ENCODE measurements at regions of chr17 and their contacts with region 1.

Region 1: DNA sequence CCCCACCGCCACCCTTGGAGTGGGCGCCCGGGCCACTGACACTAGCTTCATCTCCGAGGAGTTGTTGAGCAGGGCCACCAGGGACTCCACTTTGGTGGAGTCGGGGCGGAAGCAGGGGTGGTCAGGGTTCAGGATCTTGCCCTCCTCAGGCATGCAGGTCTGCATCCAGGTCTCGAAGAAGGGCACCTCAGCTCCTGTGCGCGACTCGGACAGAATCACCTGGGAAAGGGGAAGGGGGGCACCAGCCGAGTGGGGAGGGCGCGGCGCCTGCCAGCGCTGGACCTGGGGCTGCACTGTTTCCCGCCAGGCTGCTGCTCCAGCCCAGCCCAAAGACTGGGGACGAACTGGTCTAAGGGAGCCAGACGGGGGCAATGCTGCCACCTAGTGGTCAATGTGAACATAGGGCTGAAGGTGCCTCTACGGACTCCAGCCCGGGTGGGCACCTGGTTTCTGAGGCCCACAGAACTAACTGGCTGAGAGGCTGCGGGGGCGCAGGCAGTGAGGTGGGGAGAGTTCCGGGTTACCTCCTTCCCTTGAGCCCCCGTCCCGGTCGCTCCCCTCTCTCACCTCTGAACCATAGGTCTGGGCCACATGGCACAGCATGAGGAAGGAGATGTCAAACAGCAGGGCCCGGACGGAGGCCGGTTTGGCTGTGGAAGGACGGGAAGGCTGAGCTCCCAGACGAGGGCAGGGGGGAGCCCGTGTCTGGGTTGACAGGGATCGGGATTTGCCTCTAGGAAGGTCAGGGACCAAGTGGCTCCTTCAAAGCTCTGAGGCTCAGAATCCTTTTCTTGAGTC is 11.8 kb downstream of the CSF3 start:
- DNase-seq: peak; percentile 85
- ATAC-seq: peak; percentile 92
- H3K4me3 ChIP-seq: no peak overlapping the region
- H3K4me3 Mint-ChIP-seq: no peak overlapping the region
- H3K27ac ChIP-seq: no peak overlapping the region
- H3K27ac Mint-ChIP-seq: no peak overlapping the region
- H3K4me1 ChIP-seq: peaks cover 0 to 5% of the 10 kb centered on the region in 2 donors
- H3K4me1 Mint-ChIP-seq: peaks cover 4% of the 10 kb centered on the region
- H3K27me3 ChIP-seq: no peaks in the 10 kb centered on the region
- H3K27me3 Mint-ChIP-seq: no peaks in the 10 kb centered on the region
- CTCF ChIP-seq: peak; percentile 94

Region 2: DNA sequence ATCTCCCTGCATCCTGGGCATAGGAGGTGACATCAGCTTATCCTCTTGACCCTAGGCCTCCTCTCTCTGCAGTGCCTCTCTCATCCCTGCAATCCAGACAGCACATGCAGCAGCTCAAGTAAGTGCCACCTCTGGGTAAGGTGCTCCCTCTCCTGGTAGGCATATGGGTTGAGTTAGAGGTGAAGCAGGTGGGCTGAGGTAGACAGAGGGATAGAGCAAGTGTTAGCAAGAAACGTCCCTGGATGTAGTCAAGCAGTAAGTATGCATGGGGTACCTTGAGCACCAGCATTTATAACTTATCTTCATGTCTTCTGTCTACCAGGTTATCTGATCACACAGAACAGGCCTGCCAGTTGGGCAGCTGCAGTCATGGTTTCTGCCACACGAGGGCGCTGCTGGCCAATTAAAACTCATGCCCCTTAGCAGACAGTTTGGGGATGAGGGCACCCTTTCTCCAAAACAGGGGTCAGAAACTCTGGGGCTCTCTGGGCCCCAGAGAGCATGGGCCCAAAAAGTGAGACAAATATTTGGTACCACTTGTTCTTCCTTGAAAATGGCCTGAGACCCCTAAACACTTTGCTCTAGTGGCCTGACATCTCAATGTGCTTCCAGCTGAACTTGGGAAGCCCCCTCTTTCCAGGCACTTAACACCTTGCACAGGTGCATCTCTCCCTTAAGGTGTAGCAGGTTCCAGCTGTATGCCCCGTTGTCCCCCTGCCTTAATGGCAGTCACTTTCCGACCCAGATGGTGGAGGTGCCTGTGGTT is 479.1 kb before region 1 on chr17:
- CTCF ChIA-PET with region 1: interaction called, 12 read pairs
- POLR2A ChIA-PET with region 1: no interaction called
- intact Hi-C with region 1: no loop called
- DNase-seq: peak; percentile 83
- ATAC-seq: peak; percentile 66
- H3K4me3 ChIP-seq: no peak overlapping the region
- H3K4me3 Mint-ChIP-seq: no peak overlapping the region
- H3K27ac ChIP-seq: no peak overlapping the region
- H3K27ac Mint-ChIP-seq: no peak overlapping the region
- H3K4me1 ChIP-seq: peaks cover 28 to 39% of the 10 kb centered on the region in 2 donors
- H3K4me1 Mint-ChIP-seq: peaks cover 38% of the 10 kb centered on the region
- H3K27me3 ChIP-seq: no peaks in the 10 kb centered on the region
- H3K27me3 Mint-ChIP-seq: no peaks in the 10 kb centered on the region
- CTCF ChIP-seq: peak; percentile 96

Region 3: GRCh38 chr17:39808409-39808997 is 218.5 kb before region 1 on chr17:
- CTCF ChIA-PET with region 1: no interaction called
- POLR2A ChIA-PET with region 1: no interaction called
- intact Hi-C with region 1: no loop called
- DNase-seq: no peak
- ATAC-seq: no peak
- H3K4me3 ChIP-seq: no peak overlapping the region
- H3K4me3 Mint-ChIP-seq: no peak overlapping the region
- H3K27ac ChIP-seq: peak overlapping the region in 1 of 2 donors; percentile 79
- H3K27ac Mint-ChIP-seq: peak overlapping the region; percentile 81
- H3K4me1 ChIP-seq: peaks cover 26 to 32% of the 10 kb centered on the region in 2 donors
- H3K4me1 Mint-ChIP-seq: peaks cover 69% of the 10 kb centered on the region
- H3K27me3 ChIP-seq: no peaks in the 10 kb centered on the region
- H3K27me3 Mint-ChIP-seq: no peaks in the 10 kb centered on the region
- CTCF ChIP-seq: no peak

Region 4: DNA sequence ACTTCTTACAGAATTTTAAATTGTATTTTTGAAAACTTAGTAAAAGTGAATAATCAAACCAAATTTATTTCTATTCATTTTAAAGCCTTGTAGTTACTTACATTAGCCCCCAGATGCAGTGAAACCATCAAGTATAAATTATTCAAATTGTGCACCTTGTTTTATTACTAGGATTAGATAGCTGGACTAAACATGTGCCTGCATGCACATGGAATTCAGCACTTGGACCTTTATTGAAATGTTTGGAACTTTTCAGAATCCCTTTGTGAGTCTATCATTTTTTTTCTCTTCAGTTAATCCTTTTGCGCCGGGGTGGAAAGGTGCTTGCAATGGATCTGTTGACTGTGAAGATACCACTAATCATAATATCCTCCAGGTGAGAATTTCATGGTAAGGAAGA is 154.3 kb before region 1 on chr17:
- CTCF ChIA-PET with region 1: interaction called, 35 read pairs
- POLR2A ChIA-PET with region 1: interaction called, 8 read pairs
- intact Hi-C with region 1: loop called (anchors 1 kb)
- DNase-seq: peak; percentile 56
- ATAC-seq: peak; percentile 31
- H3K4me3 ChIP-seq: peak overlapping the region in 2 of 5 experiments; percentile 2 to 6
- H3K4me3 Mint-ChIP-seq: peak overlapping the region; percentile 67
- H3K27ac ChIP-seq: peak overlapping the region in 1 of 2 donors; percentile 36
- H3K27ac Mint-ChIP-seq: peak overlapping the region; percentile 50
- H3K4me1 ChIP-seq: peaks cover 31 to 45% of the 10 kb centered on the region in 2 donors
- H3K4me1 Mint-ChIP-seq: peaks cover 44% of the 10 kb centered on the region
- H3K27me3 ChIP-seq: no peaks in the 10 kb centered on the region
- H3K27me3 Mint-ChIP-seq: no peaks in the 10 kb centered on the region
- CTCF ChIP-seq: peak; percentile 82

Region 5: DNA sequence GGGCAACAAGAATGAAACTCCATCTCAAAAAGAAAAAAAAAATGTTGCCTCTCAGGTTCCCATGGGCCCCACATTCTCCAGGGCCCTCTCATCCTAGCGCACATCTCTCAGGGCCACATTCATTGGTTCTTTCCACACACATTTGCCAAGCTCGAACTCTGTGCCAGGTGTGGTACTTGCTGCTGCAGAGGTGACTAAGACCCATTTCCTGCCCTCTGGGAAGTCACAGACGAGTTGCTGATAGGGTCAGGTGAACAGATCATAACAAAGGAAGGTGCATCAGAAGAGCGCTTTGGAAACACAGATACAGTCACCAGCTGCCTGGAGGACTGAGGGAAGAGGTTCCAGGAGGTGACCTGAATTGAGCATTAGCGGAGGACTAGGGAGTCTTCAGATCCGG is 63.2 kb before region 1 on chr17:
- CTCF ChIA-PET with region 1: no interaction called
- POLR2A ChIA-PET with region 1: no interaction called
- intact Hi-C with region 1: loop called (anchors 1 kb)
- DNase-seq: no peak
- ATAC-seq: no peak
- H3K4me3 ChIP-seq: no peak overlapping the region
- H3K4me3 Mint-ChIP-seq: no peak overlapping the region
- H3K27ac ChIP-seq: no peak overlapping the region
- H3K27ac Mint-ChIP-seq: no peak overlapping the region
- H3K4me1 ChIP-seq: peaks cover 12 to 13% of the 10 kb centered on the region in 2 donors
- H3K4me1 Mint-ChIP-seq: peaks cover 9% of the 10 kb centered on the region
- H3K27me3 ChIP-seq: no peaks in the 10 kb centered on the region
- H3K27me3 Mint-ChIP-seq: peaks cover 15% of the 10 kb centered on the region
- CTCF ChIP-seq: no peak

Region 6: DNA sequence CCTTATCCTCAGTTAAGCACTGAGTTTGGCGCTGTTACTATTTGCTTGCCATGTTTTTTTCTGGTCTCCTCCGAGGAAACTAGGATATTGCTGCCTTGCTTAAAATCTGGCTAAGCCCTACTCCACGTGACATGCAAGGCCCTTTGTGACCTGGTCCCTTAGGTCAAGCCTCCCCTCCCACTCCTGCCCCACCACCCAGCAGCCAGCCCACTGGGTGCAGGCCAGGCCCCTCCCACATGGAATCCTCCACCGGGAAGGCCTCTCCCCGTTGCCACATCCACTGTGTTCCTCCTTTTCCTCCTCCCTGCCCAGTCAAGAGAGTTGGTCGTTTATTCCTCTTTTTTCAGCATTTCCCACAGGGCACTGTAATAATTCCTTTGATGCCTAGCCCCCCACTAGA is 30.2 kb before region 1 on chr17:
- CTCF ChIA-PET with region 1: no interaction called
- POLR2A ChIA-PET with region 1: no interaction called
- intact Hi-C with region 1: no loop called
- DNase-seq: no peak
- ATAC-seq: no peak
- H3K4me3 ChIP-seq: no peak overlapping the region
- H3K4me3 Mint-ChIP-seq: no peak overlapping the region
- H3K27ac ChIP-seq: no peak overlapping the region
- H3K27ac Mint-ChIP-seq: no peak overlapping the region
- H3K4me1 ChIP-seq: no peaks in the 10 kb centered on the region
- H3K4me1 Mint-ChIP-seq: no peaks in the 10 kb centered on the region
- H3K27me3 ChIP-seq: no peaks in the 10 kb centered on the region
- H3K27me3 Mint-ChIP-seq: no peaks in the 10 kb centered on the region
- CTCF ChIP-seq: no peak

Region 7: DNA sequence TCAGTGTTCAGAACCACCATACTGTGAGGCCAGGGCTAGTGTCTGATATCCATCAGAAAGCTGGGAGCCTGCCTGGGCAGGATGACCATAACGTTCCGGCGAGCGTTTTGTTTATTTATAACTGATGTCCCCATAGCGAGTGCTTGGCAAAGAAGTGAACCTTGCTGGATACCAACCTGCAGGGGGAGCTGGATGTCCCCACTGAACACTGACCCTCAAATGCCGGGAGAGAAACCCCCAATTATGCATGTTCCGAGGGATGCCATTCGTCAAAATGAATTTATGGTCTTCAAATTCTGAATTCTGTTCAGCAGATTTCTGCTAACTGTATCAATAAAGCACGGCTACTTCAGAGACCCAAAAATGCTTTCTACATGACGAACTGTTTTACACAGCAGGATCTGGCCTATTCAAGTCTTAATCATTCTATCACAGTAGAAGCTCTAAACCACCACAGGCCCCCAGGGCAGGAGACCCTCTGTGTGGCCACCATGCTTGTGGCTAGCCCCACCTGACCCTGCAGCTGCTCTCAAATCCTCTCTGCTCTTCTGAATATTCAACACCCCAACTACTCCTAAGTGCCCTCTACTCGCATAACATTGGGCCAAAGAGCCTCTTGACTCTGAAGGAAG is 12.0 kb after region 1 on chr17:
- CTCF ChIA-PET with region 1: interaction called, 52 read pairs
- POLR2A ChIA-PET with region 1: no interaction called
- intact Hi-C with region 1: no loop called
- DNase-seq: no peak
- ATAC-seq: no peak
- H3K4me3 ChIP-seq: no peak overlapping the region
- H3K4me3 Mint-ChIP-seq: no peak overlapping the region
- H3K27ac ChIP-seq: no peak overlapping the region
- H3K27ac Mint-ChIP-seq: no peak overlapping the region
- H3K4me1 ChIP-seq: no peaks in the 10 kb centered on the region
- H3K4me1 Mint-ChIP-seq: no peaks in the 10 kb centered on the region
- H3K27me3 ChIP-seq: no peaks in the 10 kb centered on the region
- H3K27me3 Mint-ChIP-seq: no peaks in the 10 kb centered on the region
- CTCF ChIP-seq: peak; percentile 28

Region 8: DNA sequence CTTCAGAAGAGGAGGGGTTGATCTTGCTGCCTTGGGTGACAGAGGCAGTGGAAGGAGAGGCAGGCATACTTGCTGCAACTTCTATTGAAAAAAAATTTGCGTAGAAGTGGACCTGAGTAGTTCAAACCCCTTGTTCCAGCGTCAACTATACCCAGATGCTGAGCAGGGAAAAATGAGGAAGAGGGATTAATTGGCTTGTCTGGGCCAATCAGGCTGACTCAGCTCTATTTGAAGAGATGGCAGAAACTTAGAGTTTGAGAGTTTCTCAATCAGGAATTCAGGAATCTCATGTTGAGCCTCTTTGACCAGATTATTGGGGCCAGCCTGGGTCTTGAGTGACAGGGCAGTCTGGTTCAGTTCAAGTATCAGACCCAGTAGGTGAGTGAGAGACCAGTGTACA is 131.0 kb after region 1 on chr17:
- CTCF ChIA-PET with region 1: no interaction called
- POLR2A ChIA-PET with region 1: no interaction called
- intact Hi-C with region 1: no loop called
- DNase-seq: no peak
- ATAC-seq: no peak
- H3K4me3 ChIP-seq: no peak overlapping the region
- H3K4me3 Mint-ChIP-seq: no peak overlapping the region
- H3K27ac ChIP-seq: no peak overlapping the region
- H3K27ac Mint-ChIP-seq: peak overlapping the region; percentile 10
- H3K4me1 ChIP-seq: peaks cover 0 to 7% of the 10 kb centered on the region in 2 donors
- H3K4me1 Mint-ChIP-seq: peaks cover 21% of the 10 kb centered on the region
- H3K27me3 ChIP-seq: no peaks in the 10 kb centered on the region
- H3K27me3 Mint-ChIP-seq: no peaks in the 10 kb centered on the region
- CTCF ChIP-seq: no peak

Measured in B cell (primary cell).